Mammary epithelial cell (primary cell): ENCODE measurements at regions of chr17 and their contacts with region 1.

Region 1: GRCh38 chr17:49086649-49087048 is 45.9 kb upstream of the B4GALNT2 start:
- DNase-seq: no peak
- H3K4me3 ChIP-seq: no peak overlapping the region
- H3K27ac ChIP-seq: no peak overlapping the region
- H3K4me1 ChIP-seq: no peaks in the 10 kb centered on the region
- H3K27me3 ChIP-seq: no peaks in the 10 kb centered on the region
- CTCF ChIP-seq: no peak

Region 2: DNA sequence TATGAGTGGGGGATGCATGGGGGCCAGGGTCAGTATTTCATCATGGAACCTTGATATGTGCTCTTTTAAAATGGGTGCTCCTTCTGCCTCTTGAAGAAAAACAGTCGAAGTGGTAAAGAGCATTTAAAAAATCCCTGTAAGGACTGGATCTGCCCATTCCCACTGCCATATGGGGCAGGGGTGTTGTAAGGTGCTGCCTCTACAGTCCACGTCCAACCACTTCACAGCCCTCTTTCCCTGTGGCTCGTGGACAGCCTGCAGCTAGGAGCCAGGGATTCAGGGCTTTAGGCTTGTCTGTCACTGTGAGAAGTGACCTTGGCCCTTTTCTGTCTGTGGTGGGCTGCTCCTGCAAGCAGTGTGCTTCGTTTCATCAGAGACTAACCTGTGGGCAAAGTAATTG is 45.1 kb before region 1 on chr17:
- CTCF ChIA-PET with region 1: no interaction called
- dilution Hi-C with region 1: loop called (anchors 5 kb)
- in situ Hi-C with region 1: no loop called
- intact Hi-C with region 1: no loop called
- DNase-seq: no peak
- H3K4me3 ChIP-seq: no peak overlapping the region
- H3K27ac ChIP-seq: no peak overlapping the region
- H3K4me1 ChIP-seq: no peaks in the 10 kb centered on the region
- H3K27me3 ChIP-seq: peaks cover 1% of the 10 kb centered on the region
- CTCF ChIP-seq: no peak